A549 (cell line): ENCODE measurements at regions of chr7 and their contacts with region 1.

Region 1: GRCh38 chr7:54773472-54774399 is 14.7 kb upstream of the SEC61G start:
- DNase-seq: peak; percentile 69 to 93
- ATAC-seq: peak; percentile 96 to 98
- H3K4me3 ChIP-seq: peak overlapping the region; percentile 48
- H3K27ac ChIP-seq: peak overlapping the region; percentile 74 to 81
- H3K4me1 ChIP-seq: peaks cover 14% of the 10 kb centered on the region
- CTCF ChIP-seq: peak; percentile 93
- EP300 ChIP-seq: no peak
- POLR2A ChIP-seq: no peak
- RAD21 ChIP-seq: peak; percentile 94 to 99

Region 2: GRCh38 chr7:54758702-54759592 is 14.8 kb before region 1 on chr7 and contains the start of gene SEC61G:
- CTCF ChIA-PET with region 1: interaction called, 64 read pairs
- POLR2A ChIA-PET with region 1: interaction called, 6 read pairs
- DNase-seq: peak; percentile 93 to 97
- ATAC-seq: peak; percentile 93 to 97
- H3K4me3 ChIP-seq: peak within 1 kb of the TSS; percentile 79
- H3K27ac ChIP-seq: peak within 1 kb of the TSS; percentile 93 to 100
- H3K4me1 ChIP-seq: peaks cover 13% of the 10 kb centered on the region; the same call in 2 of the 3 replicates
- CTCF ChIP-seq: no peak
- EP300 ChIP-seq: no peak
- POLR2A ChIP-seq: peak; percentile 84
- RAD21 ChIP-seq: no peak
- polyA plus RNA-seq, gene SEC61G: 290 and 356 TPM in 2 replicates

Region 3: GRCh38 chr7:54839538-54840213 is 65.9 kb after region 1 on chr7:
- CTCF ChIA-PET with region 1: interaction called, 62 read pairs
- POLR2A ChIA-PET with region 1: no interaction called
- DNase-seq: peak; percentile 80 to 81
- ATAC-seq: peak; percentile 99
- H3K4me3 ChIP-seq: no peak overlapping the region
- H3K27ac ChIP-seq: peak overlapping the region; percentile 65 to 71
- H3K4me1 ChIP-seq: peaks cover 52% of the 10 kb centered on the region
- CTCF ChIP-seq: peak; percentile 83
- EP300 ChIP-seq: no peak
- POLR2A ChIP-seq: no peak
- RAD21 ChIP-seq: peak; percentile 94 to 97

Region 4: DNA sequence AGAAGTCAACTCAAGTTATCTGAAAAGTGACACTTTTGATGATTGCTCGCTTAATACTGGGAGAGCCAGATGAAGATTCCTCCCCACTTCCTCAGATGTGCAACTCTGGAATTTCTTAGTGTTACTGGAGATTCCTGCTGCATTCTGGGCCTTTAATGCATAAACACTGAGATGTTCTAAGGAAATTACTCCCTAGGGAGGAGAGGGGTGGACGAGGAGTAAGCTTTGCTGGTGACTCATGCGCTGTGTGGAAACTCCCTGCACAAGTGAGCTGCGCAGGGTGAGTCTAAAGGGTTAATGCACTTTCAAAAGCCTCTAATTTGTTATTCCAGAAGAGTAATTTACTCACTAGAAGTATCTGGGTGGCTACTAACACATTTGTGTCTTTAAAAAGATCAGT is 291.3 kb after region 1 on chr7:
- CTCF ChIA-PET with region 1: interaction called, 23 read pairs
- POLR2A ChIA-PET with region 1: no interaction called
- DNase-seq: peak; percentile 84 to 93
- ATAC-seq: peak; percentile 88 to 89
- H3K4me3 ChIP-seq: no peak overlapping the region
- H3K27ac ChIP-seq: peak overlapping the region; percentile 84 to 92
- H3K4me1 ChIP-seq: peaks cover 98% of the 10 kb centered on the region
- CTCF ChIP-seq: no peak
- EP300 ChIP-seq: peak in 1 of 2 experiments; percentile 72; a peak in 1 of 5 replicates
- POLR2A ChIP-seq: no peak
- RAD21 ChIP-seq: no peak; a peak in 1 of 5 replicates

Region 5: DNA sequence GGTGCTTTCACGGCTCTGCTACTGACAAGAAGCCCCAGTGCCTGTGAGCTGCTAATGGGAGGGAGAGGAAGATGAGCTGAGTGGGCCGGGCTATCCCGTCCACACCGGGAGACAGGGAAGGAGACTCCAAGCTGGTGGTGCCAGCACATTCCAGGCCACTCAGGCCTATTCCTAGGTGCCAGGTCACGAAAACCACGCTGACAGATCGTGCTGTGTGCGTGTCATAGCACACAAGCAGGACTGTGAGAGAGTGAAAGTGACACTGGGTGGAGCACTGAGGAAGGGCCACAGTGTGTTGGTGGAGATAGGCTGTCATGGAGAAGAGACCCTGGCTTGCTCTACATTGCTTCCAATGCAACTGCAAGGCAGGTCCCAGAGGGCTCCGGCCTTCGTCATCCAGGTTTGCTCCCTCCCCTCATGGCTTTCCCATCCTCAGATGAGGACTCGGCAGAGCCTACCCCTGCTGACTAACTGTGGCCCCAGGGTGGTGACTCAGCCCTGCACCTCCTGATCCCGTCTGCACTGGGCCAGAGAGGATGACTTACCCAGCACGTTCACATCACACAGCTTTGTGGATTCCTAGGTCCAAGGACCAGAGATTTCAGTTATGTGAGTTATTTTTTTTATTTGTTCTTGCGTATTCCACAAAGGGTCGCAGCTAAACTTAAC is 412.3 kb after region 1 on chr7:
- CTCF ChIA-PET with region 1: interaction called, 21 read pairs
- POLR2A ChIA-PET with region 1: no interaction called
- DNase-seq: peak; percentile 85 to 92
- ATAC-seq: peak; percentile 97
- H3K4me3 ChIP-seq: no peak overlapping the region; the same call in 2 of the 3 replicates
- H3K27ac ChIP-seq: peak overlapping the region; percentile 78 to 92
- H3K4me1 ChIP-seq: peaks cover 53% of the 10 kb centered on the region
- CTCF ChIP-seq: no peak
- EP300 ChIP-seq: no peak; a peak in 1 of 5 replicates
- POLR2A ChIP-seq: no peak
- RAD21 ChIP-seq: peak in 1 of 2 experiments; percentile 9; a peak in 1 of 5 replicates

Region 6: DNA sequence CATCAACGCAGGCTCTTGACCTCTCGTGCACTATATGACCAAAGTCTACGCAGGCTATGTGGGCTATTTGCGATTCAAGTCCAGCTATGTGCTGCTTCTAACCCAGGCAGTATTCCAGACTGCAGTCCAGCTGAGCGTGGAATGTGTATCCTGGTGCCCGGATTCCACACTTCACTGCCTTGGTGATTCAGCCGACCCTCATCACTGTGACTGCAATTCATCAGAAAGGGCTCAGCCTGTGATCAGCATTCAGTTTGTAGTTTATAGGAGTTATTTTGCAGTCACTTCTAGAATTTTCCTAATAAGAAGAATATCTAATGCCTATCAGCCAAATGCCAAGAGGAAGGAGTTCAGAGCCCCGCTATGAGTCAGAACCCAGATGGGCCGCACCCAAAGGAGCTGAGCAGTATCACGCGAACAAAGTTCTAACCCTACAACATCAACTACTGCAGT is 471.6 kb after region 1 on chr7:
- CTCF ChIA-PET with region 1: interaction called, 742 read pairs
- POLR2A ChIA-PET with region 1: no interaction called
- DNase-seq: no peak
- ATAC-seq: peak in 1 of 2 experiments; percentile 70; a peak in 3 of 6 replicates
- H3K4me3 ChIP-seq: no peak overlapping the region
- H3K27ac ChIP-seq: no peak overlapping the region
- H3K4me1 ChIP-seq: peaks cover 18% of the 10 kb centered on the region; the same call in 2 of the 3 replicates
- CTCF ChIP-seq: no peak
- EP300 ChIP-seq: no peak
- POLR2A ChIP-seq: no peak
- RAD21 ChIP-seq: no peak